Panc1 (cell line): ENCODE measurements at regions of chr2 and their contacts with region 1.

Region 1: GRCh38 chr2:86157009-86157556 is 38.2 kb downstream of the IMMT start:
- DNase-seq: no peak
- ATAC-seq: no peak
- H3K4me3 ChIP-seq: no peak overlapping the region
- H3K27ac ChIP-seq: no peak overlapping the region
- H3K4me1 ChIP-seq: no peaks in the 10 kb centered on the region
- H3K27me3 ChIP-seq: no peaks in the 10 kb centered on the region
- CTCF ChIP-seq: no peak

Region 2: DNA sequence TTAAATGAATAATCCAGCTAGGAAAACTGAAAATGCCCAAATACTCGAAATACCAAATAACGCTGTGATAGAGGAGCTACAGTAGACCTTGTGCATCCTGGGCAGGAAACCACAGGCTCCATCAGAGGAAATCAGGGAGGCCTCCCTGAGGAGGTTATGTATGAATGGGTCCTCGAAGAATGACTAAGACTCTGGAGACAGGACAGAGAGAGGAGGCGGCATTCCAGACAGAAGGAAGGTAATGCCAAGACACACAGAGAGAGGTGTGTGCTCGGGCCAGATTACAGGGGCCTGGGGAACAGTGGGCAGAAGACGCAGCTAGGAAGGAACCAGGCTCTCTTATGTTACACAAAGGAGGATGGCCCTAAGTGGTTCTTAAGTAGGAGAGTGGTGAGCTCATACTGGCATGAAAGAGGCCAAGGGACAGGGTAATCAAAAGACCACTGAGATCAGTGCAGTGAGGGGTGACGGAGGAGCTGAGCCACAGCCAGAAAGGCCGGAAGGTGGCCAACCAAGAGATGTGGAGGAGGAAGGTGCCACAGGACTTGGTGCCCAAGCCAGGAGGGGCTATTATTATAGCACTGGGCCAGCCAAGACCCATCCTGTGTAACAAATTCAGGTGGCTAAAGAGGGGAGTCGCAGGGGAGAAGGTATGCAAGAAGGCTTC is 278.2 kb before region 1 on chr2:
- CTCF ChIA-PET with region 1: no interaction called
- POLR2A ChIA-PET with region 1: no interaction called
- in situ Hi-C with region 1: no loop called
- intact Hi-C with region 1: no loop called
- DNase-seq: no peak
- ATAC-seq: no peak; the same call in 1 of the 2 replicates
- H3K4me3 ChIP-seq: no peak overlapping the region
- H3K27ac ChIP-seq: no peak overlapping the region
- H3K4me1 ChIP-seq: no peaks in the 10 kb centered on the region
- H3K27me3 ChIP-seq: peaks cover 3% of the 10 kb centered on the region; the same call in 1 of the 2 replicates
- CTCF ChIP-seq: no peak

Region 3: GRCh38 chr2:86140969-86141392 is 16.1 kb before region 1 on chr2:
- CTCF ChIA-PET with region 1: no interaction called
- POLR2A ChIA-PET with region 1: interaction called, 15 read pairs
- in situ Hi-C with region 1: no loop called
- intact Hi-C with region 1: no loop called
- DNase-seq: no peak
- ATAC-seq: peak; percentile 24
- H3K4me3 ChIP-seq: no peak overlapping the region
- H3K27ac ChIP-seq: no peak overlapping the region
- H3K4me1 ChIP-seq: no peaks in the 10 kb centered on the region
- H3K27me3 ChIP-seq: no peaks in the 10 kb centered on the region
- CTCF ChIP-seq: no peak

Region 4: GRCh38 chr2:86383844-86384243 is 226.8 kb after region 1 on chr2:
- CTCF ChIA-PET with region 1: no interaction called
- POLR2A ChIA-PET with region 1: no interaction called
- in situ Hi-C with region 1: no loop called
- intact Hi-C with region 1: no loop called
- DNase-seq: no peak
- ATAC-seq: no peak
- H3K4me3 ChIP-seq: no peak overlapping the region
- H3K27ac ChIP-seq: no peak overlapping the region
- H3K4me1 ChIP-seq: no peaks in the 10 kb centered on the region
- H3K27me3 ChIP-seq: no peaks in the 10 kb centered on the region
- CTCF ChIP-seq: no peak